A549 (cell line): ENCODE measurements at regions of chrX and their contacts with region 1.

Region 1: GRCh38 chrX:66728818-66729271 is 90.0 kb upstream of the EDA2R start:
- DNase-seq: peak; percentile 30 to 74
- ATAC-seq: peak; percentile 98 to 99
- H3K4me3 ChIP-seq: peak overlapping the region; percentile 51
- H3K27ac ChIP-seq: peak overlapping the region; percentile 70 to 81
- H3K4me1 ChIP-seq: no peaks in the 10 kb centered on the region
- CTCF ChIP-seq: peak; percentile 74
- EP300 ChIP-seq: no peak
- POLR2A ChIP-seq: no peak
- RAD21 ChIP-seq: peak; percentile 68 to 78

Region 2: DNA sequence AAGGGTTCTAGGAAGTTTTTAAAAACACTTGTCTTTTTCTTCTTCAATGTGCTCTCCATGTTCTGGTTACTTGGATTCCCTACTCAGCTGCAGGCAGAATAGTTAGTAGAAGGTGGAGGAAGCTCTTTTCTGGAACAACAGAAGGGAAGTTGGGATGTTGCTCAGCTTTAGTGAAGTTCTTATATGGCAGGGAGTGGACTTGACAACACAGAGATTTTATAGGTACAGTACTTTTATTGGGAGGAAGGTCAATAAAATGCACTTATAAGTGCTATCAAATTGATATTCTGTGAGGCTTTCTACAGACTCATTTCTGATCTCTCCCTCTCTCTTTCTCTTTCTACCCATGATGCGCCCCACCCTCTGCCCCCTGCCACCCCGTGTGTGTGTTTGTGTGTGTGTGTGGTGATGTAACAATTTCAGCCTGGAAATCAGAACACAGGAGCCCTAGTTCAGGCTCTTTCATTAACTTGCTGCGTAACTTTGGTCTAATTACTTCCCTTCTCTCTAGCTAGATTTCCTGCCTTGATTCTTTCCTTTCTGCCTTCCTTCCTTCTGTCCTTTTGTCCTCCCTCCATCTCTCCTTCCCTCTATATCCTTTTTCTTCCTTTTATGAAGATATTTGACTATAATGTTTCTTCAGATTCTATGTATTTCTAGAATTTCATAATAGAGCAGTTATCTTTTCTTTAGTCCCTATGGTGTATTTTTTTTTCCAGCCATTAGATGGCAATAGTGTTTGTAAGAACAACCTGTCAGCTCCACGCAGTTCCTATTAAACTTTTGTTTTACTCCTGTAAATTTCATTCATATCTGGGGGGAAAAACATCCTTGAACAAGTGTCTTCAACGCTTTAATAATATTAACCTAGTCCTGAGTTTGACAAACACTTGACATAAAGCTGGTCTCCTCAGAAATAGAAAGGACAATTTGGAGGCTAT is 527.7 kb before region 1 on chrX:
- CTCF ChIA-PET with region 1: interaction called, 30 read pairs
- POLR2A ChIA-PET with region 1: no interaction called
- DNase-seq: peak in 1 of 2 experiments; percentile 9
- ATAC-seq: no peak
- H3K4me3 ChIP-seq: no peak overlapping the region
- H3K27ac ChIP-seq: no peak overlapping the region
- H3K4me1 ChIP-seq: no peaks in the 10 kb centered on the region
- CTCF ChIP-seq: no peak
- EP300 ChIP-seq: no peak
- POLR2A ChIP-seq: no peak
- RAD21 ChIP-seq: peak; percentile 23 to 37; a peak in 3 of 5 replicates

Region 3: DNA sequence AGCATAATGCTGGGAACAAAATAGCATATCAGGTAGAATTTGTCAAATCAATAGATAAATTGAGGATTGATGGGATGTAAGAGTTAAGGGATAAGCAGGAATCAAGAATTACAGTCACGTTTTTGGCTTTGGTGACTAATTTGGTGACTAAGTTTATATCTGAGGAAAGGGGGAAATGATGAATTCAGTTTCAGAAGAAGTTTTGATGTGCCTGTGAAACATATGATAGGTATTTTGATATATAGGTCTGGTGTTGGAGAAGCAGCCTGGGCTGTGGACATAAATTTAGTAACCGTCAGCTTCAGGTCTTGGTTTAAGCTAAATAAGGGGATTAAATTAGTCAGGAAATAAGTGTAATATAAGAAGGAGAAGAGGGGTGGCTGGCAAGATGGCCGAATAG is 10.9 kb before region 1 on chrX:
- CTCF ChIA-PET with region 1: interaction called, 15 read pairs
- POLR2A ChIA-PET with region 1: no interaction called
- DNase-seq: no peak
- ATAC-seq: no peak
- H3K4me3 ChIP-seq: no peak overlapping the region
- H3K27ac ChIP-seq: no peak overlapping the region
- H3K4me1 ChIP-seq: no peaks in the 10 kb centered on the region
- CTCF ChIP-seq: no peak
- EP300 ChIP-seq: no peak
- POLR2A ChIP-seq: no peak
- RAD21 ChIP-seq: no peak